Activated CD4-positive, alpha-beta memory T cell treated with anti-CD3 and anti-CD28 coated beads, Interleukin-2, amount 10 ng/mL, durations not matched to agents 7 days and 5 days (primary cell): ENCODE measurements at regions of chr3 and their contacts with region 1.

Region 1: GRCh38 chr3:69092030-69092516 is 7.3 kb downstream of the ARL6IP5 start:
- DNase-seq: no peak
- H3K4me3 Mint-ChIP-seq: peak overlapping the region; percentile 58
- H3K27ac Mint-ChIP-seq: peak overlapping the region; percentile 94
- H3K4me1 Mint-ChIP-seq: peaks cover 83% of the 10 kb centered on the region
- H3K27me3 Mint-ChIP-seq: no peaks in the 10 kb centered on the region

Region 2: DNA sequence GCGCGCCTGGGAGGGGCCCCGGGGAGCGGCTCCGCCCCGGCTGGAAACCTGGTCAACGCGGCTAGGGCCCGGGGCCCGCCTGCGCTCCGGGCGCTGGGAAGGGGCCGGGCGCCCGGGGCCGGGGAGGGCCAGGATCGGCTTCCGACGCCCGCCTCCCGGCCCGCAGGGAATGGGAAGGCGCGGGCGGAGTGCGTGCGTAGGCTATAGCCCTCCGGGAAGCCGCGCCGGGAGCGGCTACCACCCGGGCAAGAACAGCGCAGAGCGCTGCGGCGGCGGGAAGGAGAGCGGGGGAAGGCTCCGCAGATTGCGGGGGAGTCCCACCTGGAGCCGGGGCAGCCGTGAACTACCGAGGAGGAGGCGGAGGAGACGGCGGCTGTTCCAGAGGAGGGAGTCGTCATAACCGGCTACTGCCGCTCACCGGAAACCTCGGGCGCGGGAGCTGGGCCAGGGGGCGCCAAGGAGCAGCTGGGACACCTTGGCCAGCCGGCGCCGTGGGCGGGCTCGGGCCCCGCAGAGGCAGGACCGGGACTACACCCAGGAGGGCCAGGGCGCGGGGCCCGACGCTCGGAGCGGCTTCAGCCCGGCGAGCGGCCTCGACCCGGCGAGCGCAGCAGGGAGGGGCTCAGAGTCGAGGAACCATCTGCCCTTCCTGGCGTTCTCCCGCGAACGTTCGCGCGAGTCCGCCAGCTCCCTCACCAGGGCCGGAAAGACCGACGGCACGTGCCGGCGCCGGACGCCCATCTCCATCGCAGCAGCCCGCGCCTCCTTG is 78.6 kb before region 1 on chr3 and contains the start of gene EOGT:
- CTCF ChIA-PET with region 1: interaction called, 8 read pairs
- POLR2A ChIA-PET with region 1: interaction called, 19 read pairs
- DNase-seq: peak; percentile 85
- H3K4me3 Mint-ChIP-seq: peak within 1 kb of the TSS; percentile 83
- H3K27ac Mint-ChIP-seq: peak within 1 kb of the TSS; percentile 76
- H3K4me1 Mint-ChIP-seq: peaks cover 41% of the 10 kb centered on the region
- H3K27me3 Mint-ChIP-seq: no peaks in the 10 kb centered on the region
- total RNA-seq, gene EOGT: 12.9 to 13.7 TPM

Region 3: GRCh38 chr3:69231929-69232440 is 139.9 kb after region 1 on chr3:
- CTCF ChIA-PET with region 1: no interaction called
- POLR2A ChIA-PET with region 1: no interaction called
- DNase-seq: no peak
- H3K4me3 Mint-ChIP-seq: no peak overlapping the region
- H3K27ac Mint-ChIP-seq: no peak overlapping the region
- H3K4me1 Mint-ChIP-seq: peaks cover 17% of the 10 kb centered on the region
- H3K27me3 Mint-ChIP-seq: no peaks in the 10 kb centered on the region